Activated CD4-positive, alpha-beta memory T cell treated with anti-CD3 and anti-CD28 coated beads, Interleukin-2, amount 10 ng/mL, durations not matched to agents 7 days and 5 days (primary cell): ENCODE measurements at regions of chr1 and their contacts with region 1.

Region 1: GRCh38 chr1:153990468-153991150 is at the start of gene RPS27:
- DNase-seq: peak; percentile 91
- H3K4me3 Mint-ChIP-seq: peak within 1 kb of the TSS; percentile 90
- H3K27ac Mint-ChIP-seq: peak within 1 kb of the TSS; percentile 90
- H3K4me1 Mint-ChIP-seq: peaks cover 49% of the 10 kb centered on the region
- H3K27me3 Mint-ChIP-seq: no peaks in the 10 kb centered on the region
- total RNA-seq, gene RPS27: 2,022 to 2,087 TPM

Region 2: GRCh38 chr1:153532769-153533599 is 457.6 kb before region 1 on chr1:
- CTCF ChIA-PET with region 1: interaction called, 6 read pairs
- POLR2A ChIA-PET with region 1: interaction called, 10 read pairs
- DNase-seq: peak; percentile 89
- H3K4me3 Mint-ChIP-seq: peak overlapping the region; percentile 99
- H3K27ac Mint-ChIP-seq: peak overlapping the region; percentile 94
- H3K4me1 Mint-ChIP-seq: peaks cover 69% of the 10 kb centered on the region
- H3K27me3 Mint-ChIP-seq: no peaks in the 10 kb centered on the region

Region 3: DNA sequence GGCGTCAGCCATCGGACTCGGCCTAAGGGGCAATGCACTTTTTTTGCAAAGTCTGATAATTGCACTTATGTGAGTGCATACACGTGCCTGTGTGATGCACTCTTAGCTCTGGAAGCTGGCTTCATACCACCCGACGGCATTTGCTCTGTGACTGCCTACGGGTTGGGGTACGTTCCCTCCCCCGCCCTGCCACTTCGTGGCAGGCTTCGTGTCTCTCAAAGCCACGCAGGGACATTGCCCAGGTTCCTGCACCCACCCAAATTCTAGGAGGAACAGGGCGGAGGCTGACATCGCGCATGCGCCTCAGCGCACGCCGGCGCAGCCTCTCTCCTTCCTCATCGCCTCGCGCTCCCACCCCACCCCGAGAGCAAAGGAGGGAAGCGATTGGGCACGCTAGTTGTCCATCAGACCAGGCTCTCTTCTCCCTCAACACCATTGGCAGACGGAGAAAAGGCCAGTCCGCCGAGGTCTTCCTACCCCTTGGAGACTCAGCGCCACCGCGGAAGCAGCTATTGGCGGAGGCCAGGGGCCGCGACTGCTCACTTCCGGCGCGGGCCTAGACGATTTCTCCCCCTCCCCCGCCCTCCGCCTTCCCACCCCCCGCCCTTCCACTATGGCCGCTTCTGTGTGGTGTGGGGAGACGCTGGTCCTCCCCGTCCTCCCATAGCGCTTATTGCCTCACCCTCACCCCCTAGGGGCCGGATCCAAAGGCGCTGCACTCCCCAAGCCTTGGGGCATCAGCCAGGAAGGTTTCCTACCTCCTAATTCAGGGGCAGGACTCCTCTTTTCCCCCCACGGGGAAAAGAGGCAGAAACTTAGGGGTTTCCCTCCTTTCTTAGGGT is 262.9 kb before region 1 on chr1 and contains the start of gene INTS3:
- CTCF ChIA-PET with region 1: no interaction called
- POLR2A ChIA-PET with region 1: interaction called, 10 read pairs
- DNase-seq: peak; percentile 100
- H3K4me3 Mint-ChIP-seq: peak within 1 kb of the TSS; percentile 90
- H3K27ac Mint-ChIP-seq: peak within 1 kb of the TSS; percentile 93
- H3K4me1 Mint-ChIP-seq: peaks cover 42% of the 10 kb centered on the region
- H3K27me3 Mint-ChIP-seq: no peaks in the 10 kb centered on the region
- total RNA-seq, gene INTS3: 46.9 to 50.5 TPM

Region 4: DNA sequence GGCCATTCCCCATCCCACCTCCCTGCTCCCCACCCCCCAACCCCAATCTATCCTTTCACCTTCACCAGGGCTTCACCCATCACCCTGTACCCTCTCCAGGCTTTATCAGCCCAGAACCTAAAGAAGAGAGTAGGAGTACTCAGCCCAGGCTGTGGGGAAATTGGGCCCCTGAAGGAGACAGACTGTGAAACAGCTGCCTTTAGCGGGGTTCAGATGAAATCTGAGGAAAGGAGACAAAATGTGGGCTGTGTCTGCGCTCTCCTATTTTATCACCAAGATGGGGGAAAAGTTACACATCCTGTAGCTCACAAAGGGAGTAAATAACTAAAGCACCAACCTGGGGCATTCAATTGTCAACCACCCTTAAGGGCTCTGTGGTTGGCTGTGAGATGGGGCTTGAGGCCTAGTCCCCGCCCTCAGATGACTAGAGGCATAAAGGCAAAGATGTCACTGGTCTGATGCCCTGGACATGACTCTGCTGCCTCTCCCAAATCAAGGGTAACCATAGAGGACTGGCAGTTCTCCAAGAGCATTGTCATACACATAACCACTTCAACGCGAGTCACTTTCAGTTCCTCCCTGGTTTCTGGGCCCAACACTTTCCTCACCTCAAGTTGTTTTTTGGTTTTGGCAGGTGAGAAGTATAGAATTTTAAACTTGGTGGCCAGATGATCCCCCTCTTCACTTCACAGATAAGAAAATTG is 185.4 kb before region 1 on chr1:
- CTCF ChIA-PET with region 1: interaction called, 11 read pairs
- POLR2A ChIA-PET with region 1: interaction called, 3 read pairs
- DNase-seq: peak; percentile 71
- H3K4me3 Mint-ChIP-seq: no peak overlapping the region
- H3K27ac Mint-ChIP-seq: peak overlapping the region; percentile 60
- H3K4me1 Mint-ChIP-seq: peaks cover 30% of the 10 kb centered on the region
- H3K27me3 Mint-ChIP-seq: no peaks in the 10 kb centered on the region

Region 5: DNA sequence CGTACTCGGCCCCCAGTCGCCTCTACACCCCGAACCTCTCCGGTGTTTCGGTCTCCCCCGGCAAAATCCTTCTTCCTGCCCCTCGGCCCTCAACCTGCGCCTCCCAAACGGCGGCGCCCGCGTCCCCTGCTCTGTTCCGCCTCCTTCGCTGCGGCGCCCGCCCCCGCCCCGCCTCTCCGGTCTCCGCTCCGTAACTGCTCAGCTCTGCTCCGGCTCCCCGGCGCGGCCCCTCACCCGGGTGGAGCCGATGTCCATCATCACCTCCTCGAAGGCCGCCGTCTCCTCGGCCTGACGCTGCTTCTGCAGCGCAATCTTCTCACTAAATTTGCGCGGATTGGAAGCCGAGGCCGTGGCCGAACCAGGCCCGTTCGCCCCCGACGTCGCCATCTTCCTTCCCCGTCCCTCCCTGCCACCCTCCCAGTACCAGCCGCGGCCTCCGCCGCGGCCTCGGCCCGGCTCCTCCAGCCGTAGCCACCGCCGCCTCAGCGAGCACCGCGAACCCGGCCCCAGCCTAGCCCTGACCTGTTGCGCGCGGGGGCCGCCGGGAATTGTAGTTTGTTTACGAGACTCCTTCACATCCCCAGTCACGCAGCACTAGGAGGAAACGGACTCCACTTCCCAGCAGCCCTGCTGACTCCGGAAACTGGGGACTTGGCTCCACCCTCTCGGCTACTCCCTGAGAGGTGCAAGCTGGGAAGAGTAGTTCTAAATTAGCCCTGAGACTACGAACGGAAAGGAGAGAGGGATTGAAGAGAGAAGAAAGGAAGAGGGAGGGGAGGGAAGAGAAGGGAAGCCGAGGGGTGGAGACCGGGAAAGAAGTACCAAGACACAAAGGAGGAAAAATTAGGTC is 32.3 kb before region 1 on chr1 and contains the start of gene CRTC2:
- CTCF ChIA-PET with region 1: interaction called, 15 read pairs
- POLR2A ChIA-PET with region 1: interaction called, 11 read pairs
- DNase-seq: peak; percentile 99
- H3K4me3 Mint-ChIP-seq: peak within 1 kb of the TSS; percentile 96
- H3K27ac Mint-ChIP-seq: peak within 1 kb of the TSS; percentile 95
- H3K4me1 Mint-ChIP-seq: peaks cover 60% of the 10 kb centered on the region
- H3K27me3 Mint-ChIP-seq: no peaks in the 10 kb centered on the region
- total RNA-seq, gene CRTC2: 107 TPM

Region 6: GRCh38 chr1:154081386-154082126 is 90.9 kb after region 1 on chr1:
- CTCF ChIA-PET with region 1: no interaction called
- POLR2A ChIA-PET with region 1: no interaction called
- DNase-seq: no peak
- H3K4me3 Mint-ChIP-seq: no peak overlapping the region
- H3K27ac Mint-ChIP-seq: no peak overlapping the region
- H3K4me1 Mint-ChIP-seq: no peaks in the 10 kb centered on the region
- H3K27me3 Mint-ChIP-seq: peaks cover 5% of the 10 kb centered on the region

Region 7: GRCh38 chr1:154157520-154158306 is 167.1 kb after region 1 on chr1:
- CTCF ChIA-PET with region 1: interaction called, 3 read pairs
- POLR2A ChIA-PET with region 1: interaction called, 16 read pairs
- DNase-seq: peak; percentile 83
- H3K4me3 Mint-ChIP-seq: peak overlapping the region; percentile 49
- H3K27ac Mint-ChIP-seq: peak overlapping the region; percentile 92
- H3K4me1 Mint-ChIP-seq: peaks cover 59% of the 10 kb centered on the region
- H3K27me3 Mint-ChIP-seq: no peaks in the 10 kb centered on the region